AG04450 (cell line): ENCODE measurements at regions of chr5 and their contacts with region 1.

Region 1: GRCh38 chr5:172932313-172933017 is 26.8 kb upstream of the RPL26L1 start:
- DNase-seq: no peak
- H3K4me3 ChIP-seq: no peak overlapping the region
- H3K27ac ChIP-seq: peak overlapping the region; percentile 89
- H3K27me3 ChIP-seq: no peaks in the 10 kb centered on the region
- CTCF ChIP-seq: peak; percentile 96

Region 2: DNA sequence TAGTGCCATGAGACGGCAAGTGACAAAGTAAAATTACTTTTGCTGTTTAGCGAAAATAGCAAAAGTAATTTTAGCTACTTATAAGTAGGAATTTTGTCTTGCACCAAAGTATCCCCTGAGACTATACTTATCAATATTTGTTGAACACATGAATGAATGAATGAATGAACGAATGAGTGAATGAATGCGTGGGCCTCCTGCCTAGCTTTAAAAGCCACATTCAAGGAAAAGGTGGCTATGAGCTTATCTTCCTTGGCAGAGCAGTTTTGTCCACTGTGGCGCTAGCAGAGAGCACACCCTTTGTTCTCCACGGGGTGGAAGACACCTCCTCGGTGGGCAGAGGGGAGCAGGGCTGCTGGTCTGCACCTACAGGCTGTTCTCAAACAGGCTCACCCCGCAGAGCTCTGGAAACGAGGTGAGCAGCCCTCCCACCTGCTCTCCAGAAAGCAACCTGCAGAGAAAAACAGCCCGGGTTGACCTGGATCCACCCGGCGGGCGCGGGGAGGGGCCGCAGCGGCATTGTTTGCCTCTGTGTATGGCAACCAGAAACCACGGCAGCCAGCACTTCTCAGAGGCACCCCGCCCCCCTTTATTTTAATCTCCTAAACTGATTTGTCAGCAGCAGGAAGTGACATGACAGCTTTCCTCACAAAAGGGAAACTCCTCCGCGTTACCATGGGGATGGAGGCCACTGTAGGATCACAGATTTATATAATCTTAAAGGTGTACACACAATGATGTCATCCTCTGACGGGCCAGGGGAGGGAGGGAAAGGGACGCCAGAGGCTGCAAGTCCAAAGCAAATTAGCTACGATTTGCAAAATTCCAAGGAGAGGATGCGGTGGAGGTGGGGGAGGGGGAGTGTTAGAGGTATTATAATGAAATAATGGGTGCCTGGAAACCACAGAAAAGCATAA is 167.4 kb before region 1 on chr5:
- CTCF ChIA-PET with region 1: interaction called, 39 read pairs
- POLR2A ChIA-PET with region 1: interaction called, 45 read pairs
- DNase-seq: peak; percentile 97
- H3K4me3 ChIP-seq: peak overlapping the region; percentile 100
- H3K27ac ChIP-seq: peak overlapping the region; percentile 65
- H3K27me3 ChIP-seq: no peaks in the 10 kb centered on the region
- CTCF ChIP-seq: no peak

Region 3: DNA sequence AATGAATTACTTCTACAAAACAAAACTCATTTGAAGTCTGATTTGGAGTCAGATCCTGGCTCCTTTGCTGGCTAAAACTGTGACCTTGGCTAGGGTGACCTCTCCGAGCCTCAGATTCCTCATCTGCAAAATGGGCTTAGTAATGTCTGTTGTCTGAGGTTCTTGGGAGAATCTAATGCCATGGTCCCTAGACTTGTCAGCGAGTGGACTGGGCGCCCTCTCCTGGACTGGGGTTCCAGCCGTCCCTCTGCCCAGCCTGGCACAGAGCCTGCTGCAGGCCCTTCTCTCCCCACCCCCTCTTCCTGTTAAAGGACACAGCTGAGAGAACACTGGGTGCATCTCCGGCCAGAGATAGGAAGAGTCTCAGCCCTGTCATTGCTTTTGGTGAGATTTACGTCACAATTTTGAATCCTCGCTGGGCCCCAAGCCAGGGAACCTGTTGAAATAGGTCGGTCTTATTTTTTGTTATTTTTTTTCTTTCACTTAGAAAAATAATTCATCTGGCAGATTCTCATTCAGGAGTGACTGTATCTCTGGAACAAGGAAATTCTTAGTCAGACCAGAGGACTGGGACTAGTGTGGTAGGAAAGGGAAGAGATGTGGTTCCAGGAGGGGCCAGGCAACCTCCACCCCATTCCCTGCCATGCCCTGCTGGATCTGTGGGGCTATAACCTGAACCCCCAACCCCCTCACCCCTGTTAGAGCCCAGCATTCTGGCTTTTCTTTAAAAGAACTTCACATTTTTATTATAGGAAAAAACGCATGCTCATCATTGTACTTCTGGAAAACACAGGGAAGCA is 21.4 kb before region 1 on chr5:
- CTCF ChIA-PET with region 1: interaction called, 8 read pairs
- POLR2A ChIA-PET with region 1: interaction called, 10 read pairs
- DNase-seq: no peak
- H3K4me3 ChIP-seq: no peak overlapping the region
- H3K27ac ChIP-seq: peak overlapping the region; percentile 94
- H3K27me3 ChIP-seq: no peaks in the 10 kb centered on the region
- CTCF ChIP-seq: peak; percentile 35

Region 4: GRCh38 chr5:172958331-172959046 is 26.0 kb after region 1 on chr5:
- CTCF ChIA-PET with region 1: interaction called, 10 read pairs
- POLR2A ChIA-PET with region 1: interaction called, 5 read pairs
- DNase-seq: no peak
- H3K4me3 ChIP-seq: peak overlapping the region; percentile 56
- H3K27ac ChIP-seq: peak overlapping the region; percentile 86
- H3K27me3 ChIP-seq: no peaks in the 10 kb centered on the region
- CTCF ChIP-seq: no peak

Region 5: GRCh38 chr5:173163219-173163618 is 230.8 kb after region 1 on chr5:
- CTCF ChIA-PET with region 1: no interaction called
- POLR2A ChIA-PET with region 1: no interaction called
- DNase-seq: no peak
- H3K4me3 ChIP-seq: no peak overlapping the region
- H3K27ac ChIP-seq: no peak overlapping the region
- H3K27me3 ChIP-seq: no peaks in the 10 kb centered on the region
- CTCF ChIP-seq: no peak